Activated CD4-positive, alpha-beta memory T cell treated with anti-CD3 and anti-CD28 coated beads for 36 hours (primary cell): ENCODE measurements at regions of chr4 and their contacts with region 1.

Region 1: DNA sequence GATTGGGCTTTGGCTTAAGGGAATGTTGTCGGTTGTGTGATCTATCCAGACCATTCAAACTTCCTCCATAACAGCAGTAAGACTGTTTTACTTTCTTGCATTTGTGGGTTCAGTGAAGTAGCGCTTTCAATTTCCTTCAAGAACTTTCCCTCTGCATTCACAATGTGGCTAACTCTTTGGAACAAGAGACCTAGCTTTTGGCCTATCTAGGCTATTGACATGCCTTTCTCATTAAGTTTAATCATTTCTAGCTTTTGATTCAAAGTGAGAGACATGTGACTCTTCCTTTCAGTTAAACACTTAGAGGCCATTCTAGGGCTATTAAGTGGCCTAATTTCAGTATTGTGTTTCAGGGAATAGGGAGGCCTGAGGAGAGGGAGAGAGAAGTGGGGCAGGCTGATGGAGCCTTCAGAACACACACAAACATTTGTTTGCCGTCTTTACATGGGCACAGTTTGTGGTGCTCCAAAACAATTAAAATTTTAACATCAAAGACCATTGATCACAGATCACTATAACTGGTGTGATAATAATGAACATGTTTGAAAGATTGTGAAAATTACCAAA is 34.1 kb downstream of the ADH5 start:
- DNase-seq: no peak
- H3K4me3 Mint-ChIP-seq: no peak overlapping the region
- H3K27ac Mint-ChIP-seq: peak overlapping the region; percentile 73
- H3K4me1 Mint-ChIP-seq: peaks cover 42% of the 10 kb centered on the region
- H3K27me3 Mint-ChIP-seq: no peaks in the 10 kb centered on the region

Region 2: GRCh38 chr4:98446499-98447375 is 607.8 kb before region 1 on chr4:
- CTCF ChIA-PET with region 1: no interaction called
- POLR2A ChIA-PET with region 1: no interaction called
- intact Hi-C with region 1: loop called (anchors 1 kb)
- DNase-seq: peak; percentile 81
- H3K4me3 Mint-ChIP-seq: peak overlapping the region; percentile 48
- H3K27ac Mint-ChIP-seq: peak overlapping the region; percentile 87
- H3K4me1 Mint-ChIP-seq: peaks cover 35% of the 10 kb centered on the region
- H3K27me3 Mint-ChIP-seq: no peaks in the 10 kb centered on the region

Region 3: GRCh38 chr4:98794565-98795205 is 259.8 kb before region 1 on chr4:
- CTCF ChIA-PET with region 1: no interaction called
- POLR2A ChIA-PET with region 1: no interaction called
- intact Hi-C with region 1: loop called (anchors 1 kb)
- DNase-seq: peak; percentile 73
- H3K4me3 Mint-ChIP-seq: no peak overlapping the region
- H3K27ac Mint-ChIP-seq: no peak overlapping the region
- H3K4me1 Mint-ChIP-seq: peaks cover 18% of the 10 kb centered on the region
- H3K27me3 Mint-ChIP-seq: no peaks in the 10 kb centered on the region

Region 4: GRCh38 chr4:99028187-99028586 is 26.3 kb before region 1 on chr4:
- CTCF ChIA-PET with region 1: interaction called, 11 read pairs
- POLR2A ChIA-PET with region 1: no interaction called
- intact Hi-C with region 1: loop called (anchors 2 kb)
- DNase-seq: peak; percentile 21
- H3K4me3 Mint-ChIP-seq: no peak overlapping the region
- H3K27ac Mint-ChIP-seq: no peak overlapping the region
- H3K4me1 Mint-ChIP-seq: peaks cover 57% of the 10 kb centered on the region
- H3K27me3 Mint-ChIP-seq: no peaks in the 10 kb centered on the region

Region 5: DNA sequence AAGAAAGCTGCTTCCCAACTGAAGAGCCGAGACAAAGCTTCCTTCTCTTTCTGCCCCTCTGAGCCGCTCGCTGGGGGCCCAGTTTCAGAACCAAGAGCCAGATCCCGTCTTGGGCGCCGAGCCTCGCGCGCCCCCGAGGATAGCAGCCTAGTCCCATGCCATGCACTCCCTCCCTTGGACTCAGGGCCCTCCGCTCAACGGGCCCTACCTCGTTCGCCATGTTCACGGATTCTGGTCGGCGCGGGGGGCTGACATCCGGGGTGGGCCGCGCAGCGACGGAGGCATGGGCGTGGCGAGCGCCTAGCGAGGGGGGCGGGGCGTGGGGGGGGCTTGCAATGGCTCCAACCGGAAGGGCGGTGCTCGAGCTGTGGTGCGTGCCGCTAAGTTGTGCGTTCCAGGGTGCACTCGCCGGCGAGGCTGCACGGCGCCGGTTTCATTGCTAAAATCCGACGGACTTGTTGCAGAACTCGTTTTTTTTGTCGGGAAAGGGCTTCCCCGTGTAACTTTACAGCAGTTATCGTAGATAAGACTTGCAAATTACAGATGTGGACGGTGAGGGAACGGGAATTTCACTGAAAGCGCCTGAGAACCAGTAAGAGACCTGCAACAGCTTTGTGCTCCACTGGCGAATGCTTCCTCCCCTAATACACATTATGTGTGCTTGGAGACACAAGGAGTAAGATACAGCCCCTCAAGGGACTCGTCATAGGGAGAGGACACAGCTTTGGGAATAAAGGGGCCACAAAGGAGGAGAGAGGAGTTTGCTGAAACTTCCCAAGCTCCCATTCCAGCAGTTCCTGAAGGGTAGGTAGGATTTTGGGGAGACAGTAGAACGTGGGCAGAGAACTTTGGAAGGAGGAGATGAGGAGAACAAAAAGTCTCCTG is 34.2 kb after region 1 on chr4 and contains the start of gene ADH5:
- CTCF ChIA-PET with region 1: interaction called, 9 read pairs
- POLR2A ChIA-PET with region 1: interaction called, 9 read pairs
- intact Hi-C with region 1: loop called (anchors 1 kb)
- DNase-seq: peak; percentile 95
- H3K4me3 Mint-ChIP-seq: peak within 1 kb of the TSS; percentile 96
- H3K27ac Mint-ChIP-seq: peak within 1 kb of the TSS; percentile 93
- H3K4me1 Mint-ChIP-seq: peaks cover 37% of the 10 kb centered on the region
- H3K27me3 Mint-ChIP-seq: no peaks in the 10 kb centered on the region
- total RNA-seq, gene ADH5: 112 to 119 TPM